Activated CD4-positive, alpha-beta T cell treated with anti-CD3 and anti-CD28 coated beads for 36 hours (primary cell): ENCODE measurements at regions of chr2 and their contacts with region 1.

Region 1: GRCh38 chr2:46239847-46240181 is 57.4 kb upstream of the EPAS1 start:
- DNase-seq: peak; percentile 86
- ATAC-seq: peak; percentile 99
- H3K4me3 Mint-ChIP-seq: no peak overlapping the region
- H3K27ac Mint-ChIP-seq: peak overlapping the region; percentile 92
- H3K4me1 Mint-ChIP-seq: peaks cover 41% of the 10 kb centered on the region
- H3K27me3 Mint-ChIP-seq: no peaks in the 10 kb centered on the region

Region 2: DNA sequence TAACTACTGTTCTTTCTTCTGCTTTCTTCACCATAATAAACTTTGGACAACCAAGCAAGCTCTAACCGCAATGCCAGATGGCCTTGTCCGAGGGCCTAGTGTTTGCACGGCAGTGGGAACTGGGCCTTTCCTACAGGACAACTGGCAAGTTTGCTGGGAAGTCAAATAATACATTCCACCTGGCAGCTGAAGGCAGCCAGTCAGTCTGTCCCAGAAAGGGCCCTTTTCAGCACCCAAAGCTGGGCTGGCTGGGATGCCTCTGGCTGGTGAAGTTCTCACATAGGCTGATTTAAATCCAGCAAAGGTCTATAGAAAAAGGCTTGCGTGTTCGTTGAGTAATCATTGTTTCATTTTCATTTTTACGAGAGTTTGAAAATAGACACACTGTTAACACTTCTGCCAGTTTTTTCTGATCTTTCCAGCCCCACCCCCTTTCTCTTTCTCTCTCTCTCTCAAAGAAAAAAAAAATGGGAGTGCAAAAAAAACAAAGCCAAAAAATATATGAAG is 52.6 kb before region 1 on chr2:
- CTCF ChIA-PET with region 1: no interaction called
- POLR2A ChIA-PET with region 1: no interaction called
- intact Hi-C with region 1: loop called (anchors 1 to 5 kb)
- DNase-seq: peak; percentile 65
- ATAC-seq: peak; percentile 99
- H3K4me3 Mint-ChIP-seq: no peak overlapping the region
- H3K27ac Mint-ChIP-seq: peak overlapping the region; percentile 85
- H3K4me1 Mint-ChIP-seq: peaks cover 13% of the 10 kb centered on the region
- H3K27me3 Mint-ChIP-seq: no peaks in the 10 kb centered on the region

Region 3: GRCh38 chr2:46229134-46230063 is 10.4 kb before region 1 on chr2:
- CTCF ChIA-PET with region 1: interaction called, 5 read pairs
- POLR2A ChIA-PET with region 1: interaction called, 5 read pairs
- intact Hi-C with region 1: loop called in 1 of 2 experiments (anchors 1 kb)
- DNase-seq: peak; percentile 39
- ATAC-seq: peak; percentile 76
- H3K4me3 Mint-ChIP-seq: no peak overlapping the region
- H3K27ac Mint-ChIP-seq: peak overlapping the region; percentile 68
- H3K4me1 Mint-ChIP-seq: peaks cover 42% of the 10 kb centered on the region
- H3K27me3 Mint-ChIP-seq: no peaks in the 10 kb centered on the region

Region 4: DNA sequence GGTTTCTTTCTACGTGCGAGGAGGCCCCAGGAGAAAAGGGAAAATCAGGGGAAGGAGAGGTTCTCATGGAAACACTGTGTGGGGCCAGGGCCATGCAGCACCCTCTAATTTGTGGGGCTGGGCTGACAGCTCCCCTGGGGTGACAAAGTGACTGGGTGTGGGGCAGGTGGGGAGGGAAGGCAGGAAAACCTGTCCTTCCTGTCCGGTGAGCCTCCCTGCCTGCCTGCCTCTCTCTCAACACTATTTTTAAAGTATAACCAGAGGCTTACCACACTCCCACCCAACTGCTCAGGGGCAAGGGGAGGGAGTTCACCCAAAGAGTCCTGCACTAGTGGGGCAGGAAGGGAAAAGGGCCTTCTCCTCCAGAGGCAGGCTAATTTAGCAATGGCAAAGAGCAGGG is 46.9 kb after region 1 on chr2:
- CTCF ChIA-PET with region 1: no interaction called
- POLR2A ChIA-PET with region 1: no interaction called
- intact Hi-C with region 1: no loop called
- DNase-seq: no peak
- ATAC-seq: no peak
- H3K4me3 Mint-ChIP-seq: no peak overlapping the region
- H3K27ac Mint-ChIP-seq: no peak overlapping the region
- H3K4me1 Mint-ChIP-seq: no peaks in the 10 kb centered on the region
- H3K27me3 Mint-ChIP-seq: no peaks in the 10 kb centered on the region